ENCODE measurements at regions of chr3 and their contacts with region 1.

Region 1: GRCh38 chr3:70716832-70717231 is 404.4 kb upstream of the MDFIC2 start:
- DNase-seq: peak; percentile 86
- H3K4me3 ChIP-seq: no peak overlapping the region
- H3K27ac ChIP-seq: no peak overlapping the region
- H3K4me1 ChIP-seq: peaks cover 5% of the 10 kb centered on the region
- H3K27me3 ChIP-seq: no peaks in the 10 kb centered on the region
- CTCF ChIP-seq: peak; percentile 17 to 46
- POLR2A ChIP-seq: no peak

Region 2: GRCh38 chr3:70550723-70551319 is 166.0 kb before region 1 on chr3:
- CTCF ChIA-PET with region 1: interaction called, 19 read pairs
- POLR2A ChIA-PET with region 1: no interaction called
- dilution Hi-C with region 1: no loop called
- intact Hi-C with region 1: no loop called
- DNase-seq: peak; percentile 75
- H3K4me3 ChIP-seq: no peak overlapping the region
- H3K27ac ChIP-seq: no peak overlapping the region
- H3K4me1 ChIP-seq: no peaks in the 10 kb centered on the region
- H3K27me3 ChIP-seq: no peaks in the 10 kb centered on the region
- CTCF ChIP-seq: peak; percentile 63 to 85
- POLR2A ChIP-seq: no peak

Region 3: GRCh38 chr3:70982700-70983140 is 265.9 kb after region 1 on chr3:
- CTCF ChIA-PET with region 1: interaction called, 19 read pairs
- POLR2A ChIA-PET with region 1: no interaction called
- dilution Hi-C with region 1: no loop called
- intact Hi-C with region 1: no loop called
- DNase-seq: peak; percentile 97
- H3K4me3 ChIP-seq: no peak overlapping the region
- H3K27ac ChIP-seq: peak overlapping the region; percentile 92
- H3K4me1 ChIP-seq: peaks cover 46% of the 10 kb centered on the region
- H3K27me3 ChIP-seq: no peaks in the 10 kb centered on the region
- CTCF ChIP-seq: no peak
- POLR2A ChIP-seq: peak; percentile 56

Region 4: GRCh38 chr3:71006810-71007785 is 290.3 kb after region 1 on chr3:
- CTCF ChIA-PET with region 1: interaction called, 28 read pairs
- POLR2A ChIA-PET with region 1: no interaction called
- dilution Hi-C with region 1: no loop called
- intact Hi-C with region 1: loop called (anchors 1 kb)
- DNase-seq: peak; percentile 75
- H3K4me3 ChIP-seq: no peak overlapping the region
- H3K27ac ChIP-seq: peak overlapping the region; percentile 53
- H3K4me1 ChIP-seq: peaks cover 54% of the 10 kb centered on the region
- H3K27me3 ChIP-seq: no peaks in the 10 kb centered on the region
- CTCF ChIP-seq: peak in 1 of 2 donors; percentile 15
- POLR2A ChIP-seq: no peak

Region 5: GRCh38 chr3:71064288-71064955 is 347.6 kb after region 1 on chr3:
- CTCF ChIA-PET with region 1: interaction called, 19 read pairs
- POLR2A ChIA-PET with region 1: no interaction called
- dilution Hi-C with region 1: no loop called
- intact Hi-C with region 1: loop called (anchors 2 kb)
- DNase-seq: peak; percentile 76
- H3K4me3 ChIP-seq: peak overlapping the region; percentile 64 to 93 (median 84)
- H3K27ac ChIP-seq: peak overlapping the region; percentile 83
- H3K4me1 ChIP-seq: peaks cover 55% of the 10 kb centered on the region
- H3K27me3 ChIP-seq: no peaks in the 10 kb centered on the region
- CTCF ChIP-seq: no peak
- POLR2A ChIP-seq: peak; percentile 24

Region 6: GRCh38 chr3:71652781-71653413 is 936.1 kb after region 1 on chr3:
- CTCF ChIA-PET with region 1: interaction called, 14 read pairs
- POLR2A ChIA-PET with region 1: no interaction called
- dilution Hi-C with region 1: no loop called
- intact Hi-C with region 1: loop called (anchors 2 kb)
- DNase-seq: peak; percentile 78
- H3K4me3 ChIP-seq: no peak overlapping the region
- H3K27ac ChIP-seq: no peak overlapping the region
- H3K4me1 ChIP-seq: peaks cover 9% of the 10 kb centered on the region
- H3K27me3 ChIP-seq: no peaks in the 10 kb centered on the region
- CTCF ChIP-seq: peak; percentile 17 to 42
- POLR2A ChIP-seq: no peak